Pancreas (tissue), 10 donors: ENCODE measurements at regions of chr10 and their contacts with region 1.

Region 1: GRCh38 chr10:96642973-96643372 is 56.2 kb upstream of the TM9SF3 start:
- DNase-seq: peak; percentile 72 to 88 (median 82)
- ATAC-seq: peak; percentile 74 to 80 (median 76)
- H3K4me3 ChIP-seq: no peak overlapping the region
- H3K27ac ChIP-seq: peak overlapping the region in 1 of 4 donors; percentile 62
- H3K4me1 ChIP-seq: peaks cover 0 to 14% (median 3%) of the 10 kb centered on the region in 3 donors
- H3K27me3 ChIP-seq: no peaks in the 10 kb centered on the region
- CTCF ChIP-seq: peak; percentile 47 to 62 (median 50)

Region 2: GRCh38 chr10:96831867-96832720 is 189.1 kb after region 1 on chr10 and contains the start of gene LCOR:
- intact Hi-C with region 1: loop called in 1 of 3 experiments (anchors 5 kb)
- DNase-seq: peak; percentile 89 to 94 (median 91)
- ATAC-seq: peak; percentile 79 to 86 (median 84)
- H3K4me3 ChIP-seq: peak within 1 kb of the TSS; percentile 78 to 87 (median 86)
- H3K27ac ChIP-seq: peak within 1 kb of the TSS; percentile 71 to 98 (median 90)
- H3K4me1 ChIP-seq: peaks cover 5 to 29% (median 28%) of the 10 kb centered on the region in 3 donors
- H3K27me3 ChIP-seq: no peaks in the 10 kb centered on the region
- CTCF ChIP-seq: no peak
- total RNA-seq, gene LCOR: 17.2 to 34.2 (median 22.3) TPM